ENCODE measurements at regions of chr7 and their contacts with region 1.

Region 1: GRCh38 chr7:65216459-65216858 is 157.2 kb upstream of the ZNF92 start:
- DNase-seq: peak; percentile 35 to 61
- H3K4me3 ChIP-seq: no peak overlapping the region
- H3K27ac ChIP-seq: no peak overlapping the region
- H3K4me1 ChIP-seq: no peaks in the 10 kb centered on the region
- H3K27me3 ChIP-seq: no peaks in the 10 kb centered on the region
- CTCF ChIP-seq: peak; percentile 82

Region 2: GRCh38 chr7:65251851-65252620 is 35.6 kb after region 1 on chr7:
- CTCF ChIA-PET with region 1: no interaction called
- POLR2A ChIA-PET with region 1: no interaction called
- intact Hi-C with region 1: no loop called
- DNase-seq: peak in 1 of 2 experiments; percentile 55
- H3K4me3 ChIP-seq: no peak overlapping the region
- H3K27ac ChIP-seq: no peak overlapping the region
- H3K4me1 ChIP-seq: no peaks in the 10 kb centered on the region
- H3K27me3 ChIP-seq: no peaks in the 10 kb centered on the region
- CTCF ChIP-seq: no peak

Region 3: GRCh38 chr7:65307651-65308299 is 91.3 kb after region 1 on chr7:
- CTCF ChIA-PET with region 1: interaction called, 3 read pairs
- POLR2A ChIA-PET with region 1: no interaction called
- intact Hi-C with region 1: loop called (anchors 2 kb)
- DNase-seq: peak in 1 of 2 experiments; percentile 31
- H3K4me3 ChIP-seq: no peak overlapping the region
- H3K27ac ChIP-seq: no peak overlapping the region
- H3K4me1 ChIP-seq: no peaks in the 10 kb centered on the region
- H3K27me3 ChIP-seq: peaks cover 7% of the 10 kb centered on the region; the same call in 1 of the 2 replicates
- CTCF ChIP-seq: peak; percentile 85

Region 4: GRCh38 chr7:65448816-65449504 is 232.5 kb after region 1 on chr7:
- CTCF ChIA-PET with region 1: no interaction called
- POLR2A ChIA-PET with region 1: no interaction called
- intact Hi-C with region 1: loop called (anchors 5 kb)
- DNase-seq: no peak
- H3K4me3 ChIP-seq: no peak overlapping the region
- H3K27ac ChIP-seq: no peak overlapping the region
- H3K4me1 ChIP-seq: no peaks in the 10 kb centered on the region
- H3K27me3 ChIP-seq: no peaks in the 10 kb centered on the region
- CTCF ChIP-seq: no peak

Measured in PC-9 (cell line).